ENCODE measurements at regions of chr14 and their contacts with region 1.

Region 1: GRCh38 chr14:50599700-50600444 is 39.9 kb downstream of the ATL1 start:
- DNase-seq: no peak
- ATAC-seq: peak; percentile 30 to 45

Region 2: DNA sequence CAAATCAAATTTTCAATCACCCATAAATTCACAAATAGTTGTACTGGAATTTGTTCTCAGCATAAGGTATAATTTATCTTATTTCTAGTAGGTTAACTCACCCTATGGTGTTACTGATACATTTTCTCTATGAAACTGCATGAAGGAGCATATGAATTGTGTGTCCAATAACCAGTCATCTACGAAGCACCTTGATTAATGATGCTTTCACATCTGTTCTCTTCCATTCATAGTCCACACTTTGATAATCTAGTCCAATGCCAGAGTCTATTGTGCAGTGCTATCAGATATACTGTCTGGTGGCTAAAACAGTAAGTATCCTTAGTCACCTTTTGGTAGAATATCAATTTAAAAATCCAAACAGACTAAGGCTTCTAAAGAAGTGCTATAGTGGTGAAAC is 1889.7 kb before region 1 on chr14:
- intact Hi-C with region 1: no loop called
- DNase-seq: no peak
- ATAC-seq: no peak

Region 3: GRCh38 chr14:50099335-50099734 is 500.5 kb before region 1 on chr14:
- intact Hi-C with region 1: no loop called
- DNase-seq: no peak
- ATAC-seq: no peak

Region 4: DNA sequence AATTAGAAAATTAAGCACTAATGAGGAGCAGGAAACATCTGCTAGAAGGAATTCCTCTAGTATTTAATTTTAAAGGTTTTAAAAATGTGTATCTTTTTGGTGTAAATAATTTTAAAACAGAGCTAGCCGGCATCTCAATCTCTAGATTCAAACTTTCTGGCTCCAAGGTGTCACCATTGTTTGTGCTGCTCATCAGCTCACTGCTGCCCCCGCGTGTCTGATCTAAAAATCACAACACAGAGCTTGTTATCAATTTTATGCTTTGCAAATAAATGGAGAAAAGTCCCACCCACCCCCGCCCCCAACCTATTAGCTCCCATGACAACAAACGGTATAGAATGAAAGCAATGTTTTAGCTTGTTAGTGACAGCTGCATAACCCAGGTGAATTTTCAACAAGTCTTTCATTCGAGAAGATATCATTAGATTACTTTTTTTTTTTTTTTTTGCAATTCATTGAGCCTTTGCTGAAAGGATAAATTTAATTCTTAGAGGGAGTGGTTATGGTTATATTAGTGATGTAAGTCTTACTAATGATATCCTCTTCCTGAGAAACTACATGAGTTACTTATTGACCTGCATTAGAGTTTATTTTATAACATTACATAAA is 260.7 kb after region 1 on chr14:
- intact Hi-C with region 1: loop called (anchors 5 to 10 kb)
- DNase-seq: peak; percentile 83
- ATAC-seq: peak; percentile 79